ENCODE measurements at regions of chr7 and their contacts with region 1.

Region 1: GRCh38 chr7:132029369-132030085 is 473.1 kb upstream of the PODXL start:
- DNase-seq: no peak
- ATAC-seq: no peak
- H3K4me3 ChIP-seq: no peak overlapping the region
- H3K27ac ChIP-seq: no peak overlapping the region
- H3K4me1 ChIP-seq: no peaks in the 10 kb centered on the region
- H3K27me3 ChIP-seq: peaks cover 0 to 5% of the 10 kb centered on the region in 2 experiments; a peak in 1 of 5 replicates
- CTCF ChIP-seq: no peak
- EP300 ChIP-seq: no peak
- POLR2A ChIP-seq: no peak
- RAD21 ChIP-seq: no peak

Region 2: DNA sequence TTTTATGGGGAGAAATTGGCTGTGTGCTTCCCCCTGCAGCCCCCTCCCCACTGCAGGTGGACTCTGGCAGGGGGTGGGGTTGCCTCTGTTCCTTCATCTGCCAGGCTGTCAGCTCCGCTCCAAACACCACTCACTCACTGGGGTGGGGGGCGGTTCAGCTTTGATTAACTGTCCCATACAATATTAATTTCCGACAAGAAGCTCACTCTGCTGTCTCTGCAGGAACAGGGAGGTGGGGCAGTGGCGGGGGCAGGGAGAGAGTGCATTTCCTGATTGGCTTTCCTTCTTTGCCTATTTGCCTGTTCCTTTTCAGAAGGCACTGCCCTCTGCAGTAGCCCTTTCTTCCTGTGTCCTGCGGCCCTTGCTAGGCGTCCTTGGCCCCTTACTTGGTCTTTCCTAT is 46.0 kb after region 1 on chr7:
- CTCF ChIA-PET with region 1: no interaction called
- POLR2A ChIA-PET with region 1: no interaction called
- in situ Hi-C with region 1: no loop called
- intact Hi-C with region 1: loop called (anchors 2 kb)
- DNase-seq: no peak
- ATAC-seq: no peak
- H3K4me3 ChIP-seq: no peak overlapping the region
- H3K27ac ChIP-seq: no peak overlapping the region
- H3K4me1 ChIP-seq: no peaks in the 10 kb centered on the region
- H3K27me3 ChIP-seq: peaks cover 0 to 36% of the 10 kb centered on the region in 2 experiments; a peak in 4 of 5 replicates
- CTCF ChIP-seq: no peak
- EP300 ChIP-seq: no peak
- POLR2A ChIP-seq: no peak
- RAD21 ChIP-seq: no peak